ENCODE measurements at regions of chr5 and their contacts with region 1.

Region 1: GRCh38 chr5:140632150-140633020 is 590 bp downstream of the CD14 start:
- DNase-seq: peak; percentile 22 to 70 (median 44)
- ATAC-seq: peak; percentile 86 to 87
- H3K4me3 Mint-ChIP-seq: peak overlapping the region; percentile 87 to 94 (median 92)
- H3K27ac Mint-ChIP-seq: peak overlapping the region; percentile 70 to 96 (median 85)
- H3K4me1 Mint-ChIP-seq: peaks cover 13 to 35% (median 28%) of the 10 kb centered on the region in 4 donors
- H3K27me3 Mint-ChIP-seq: peaks cover 0 to 13% (median 2%) of the 10 kb centered on the region in 5 donors

Region 2: DNA sequence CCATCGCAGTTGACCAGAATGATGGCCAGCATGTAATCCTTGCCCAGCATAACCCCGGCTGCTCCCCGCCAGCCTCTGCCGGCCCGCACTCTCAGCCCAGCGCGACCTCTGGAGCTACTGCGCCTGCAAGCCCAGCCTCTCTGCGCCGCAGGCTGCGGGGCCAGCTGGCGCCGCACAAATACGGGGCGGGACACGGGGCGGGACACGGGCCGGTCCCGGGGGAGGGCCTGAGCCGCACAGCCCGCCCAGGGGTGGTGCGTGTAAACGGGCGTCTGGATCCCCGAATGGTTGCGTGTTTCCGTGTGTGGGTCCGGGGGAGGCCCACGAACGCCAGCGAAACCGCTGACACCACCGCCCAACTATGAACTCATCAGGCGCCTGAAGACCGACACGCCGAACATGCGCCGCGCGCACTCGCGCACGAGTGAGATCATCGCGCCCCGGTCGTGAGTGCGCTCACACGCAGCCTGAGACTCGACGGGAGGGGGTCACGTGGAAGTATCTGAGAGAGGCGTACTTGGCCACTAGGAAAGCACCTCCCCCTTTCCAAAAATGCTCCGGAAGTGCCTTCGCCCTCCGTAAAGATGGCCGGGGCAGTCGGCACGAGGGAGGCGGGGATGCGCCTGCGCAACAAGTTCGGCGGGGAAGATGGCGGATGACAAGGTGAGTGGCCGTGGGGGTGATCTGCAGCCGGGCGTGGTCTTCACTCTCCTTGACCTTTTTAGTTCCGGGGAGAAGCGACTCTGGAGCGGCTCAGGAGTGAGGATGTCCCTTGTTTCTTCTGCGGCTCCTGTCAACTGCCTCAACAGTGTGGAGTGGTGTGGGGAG is 68.0 kb before region 1 on chr5 and contains the starts of genes APBB3 and SLC35A4:
- POLR2A ChIA-PET with region 1: interaction called, 26 read pairs
- DNase-seq: peak; percentile 85 to 99 (median 98)
- ATAC-seq: peak; percentile 88
- H3K4me3 Mint-ChIP-seq: peak within 1 kb of the TSS; percentile 91 to 99 (median 96)
- H3K27ac Mint-ChIP-seq: peak within 1 kb of the TSS; percentile 96 to 99 (median 98)
- H3K4me1 Mint-ChIP-seq: peaks cover 39 to 71% (median 66%) of the 10 kb centered on the region in 4 donors
- H3K27me3 Mint-ChIP-seq: no peaks in the 10 kb centered on the region
- polyA plus RNA-seq, gene APBB3: 2.5 to 4.6 (median 3.7) TPM
- polyA plus RNA-seq, gene SLC35A4: 92.8 to 142 (median 113) TPM

Region 3: GRCh38 chr5:140764177-140765020 is 132.0 kb after region 1 on chr5:
- POLR2A ChIA-PET with region 1: no interaction called
- DNase-seq: no peak
- ATAC-seq: no peak
- H3K4me3 Mint-ChIP-seq: no peak overlapping the region
- H3K27ac Mint-ChIP-seq: no peak overlapping the region
- H3K4me1 Mint-ChIP-seq: no peaks in the 10 kb centered on the region
- H3K27me3 Mint-ChIP-seq: peaks cover 0 to 5% (median 0%) of the 10 kb centered on the region in 5 donors